ENCODE measurements at regions of chr1 and their contacts with region 1.

Region 1: DNA sequence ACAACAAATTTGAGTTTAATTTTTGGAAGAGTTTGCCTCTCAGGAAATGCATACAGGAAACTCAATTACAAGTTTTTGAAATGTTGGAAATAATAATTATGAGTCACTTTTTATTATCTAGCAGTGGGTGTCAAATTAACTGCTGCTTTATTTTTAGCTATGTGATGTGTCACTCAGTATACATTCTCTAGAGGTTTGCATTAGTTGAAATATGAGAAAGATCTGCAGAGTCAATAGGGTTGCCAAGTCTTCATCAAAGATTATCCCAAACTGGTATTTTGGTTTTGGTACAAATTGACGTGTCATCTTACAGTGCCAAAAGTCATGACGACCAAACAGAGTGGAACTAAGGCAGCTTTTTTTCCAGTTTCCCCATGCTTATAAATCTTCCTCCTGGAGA is 54.3 kb upstream of the DIPK1A start:
- DNase-seq: no peak
- H3K4me3 ChIP-seq: no peak overlapping the region
- H3K27ac ChIP-seq: no peak overlapping the region
- H3K4me1 ChIP-seq: no peaks in the 10 kb centered on the region
- H3K27me3 ChIP-seq: no peaks in the 10 kb centered on the region
- CTCF ChIP-seq: no peak
- EP300 ChIP-seq: no peak
- POLR2A ChIP-seq: no peak

Region 2: GRCh38 chr1:93051961-93052360 is 36.4 kb after region 1 on chr1:
- in situ Hi-C with region 1: no loop called
- intact Hi-C with region 1: no loop called
- DNase-seq: no peak
- H3K4me3 ChIP-seq: no peak overlapping the region
- H3K27ac ChIP-seq: no peak overlapping the region
- H3K4me1 ChIP-seq: no peaks in the 10 kb centered on the region
- H3K27me3 ChIP-seq: no peaks in the 10 kb centered on the region
- CTCF ChIP-seq: no peak
- EP300 ChIP-seq: no peak
- POLR2A ChIP-seq: no peak

Region 3: GRCh38 chr1:93061895-93062792 is 46.6 kb after region 1 on chr1:
- in situ Hi-C with region 1: loop called in 1 of 4 experiments (anchors 10 kb)
- intact Hi-C with region 1: no loop called
- DNase-seq: peak; percentile 43
- H3K4me3 ChIP-seq: no peak overlapping the region
- H3K27ac ChIP-seq: no peak overlapping the region
- H3K4me1 ChIP-seq: no peaks in the 10 kb centered on the region
- H3K27me3 ChIP-seq: no peaks in the 10 kb centered on the region
- CTCF ChIP-seq: peak; percentile 39 to 78 (median 59)
- EP300 ChIP-seq: no peak
- POLR2A ChIP-seq: no peak

Measured in transverse colon (tissue), 4 donors.